Ovary (tissue), 10 donors: ENCODE measurements at regions of chr1 and their contacts with region 1.

Region 1: DNA sequence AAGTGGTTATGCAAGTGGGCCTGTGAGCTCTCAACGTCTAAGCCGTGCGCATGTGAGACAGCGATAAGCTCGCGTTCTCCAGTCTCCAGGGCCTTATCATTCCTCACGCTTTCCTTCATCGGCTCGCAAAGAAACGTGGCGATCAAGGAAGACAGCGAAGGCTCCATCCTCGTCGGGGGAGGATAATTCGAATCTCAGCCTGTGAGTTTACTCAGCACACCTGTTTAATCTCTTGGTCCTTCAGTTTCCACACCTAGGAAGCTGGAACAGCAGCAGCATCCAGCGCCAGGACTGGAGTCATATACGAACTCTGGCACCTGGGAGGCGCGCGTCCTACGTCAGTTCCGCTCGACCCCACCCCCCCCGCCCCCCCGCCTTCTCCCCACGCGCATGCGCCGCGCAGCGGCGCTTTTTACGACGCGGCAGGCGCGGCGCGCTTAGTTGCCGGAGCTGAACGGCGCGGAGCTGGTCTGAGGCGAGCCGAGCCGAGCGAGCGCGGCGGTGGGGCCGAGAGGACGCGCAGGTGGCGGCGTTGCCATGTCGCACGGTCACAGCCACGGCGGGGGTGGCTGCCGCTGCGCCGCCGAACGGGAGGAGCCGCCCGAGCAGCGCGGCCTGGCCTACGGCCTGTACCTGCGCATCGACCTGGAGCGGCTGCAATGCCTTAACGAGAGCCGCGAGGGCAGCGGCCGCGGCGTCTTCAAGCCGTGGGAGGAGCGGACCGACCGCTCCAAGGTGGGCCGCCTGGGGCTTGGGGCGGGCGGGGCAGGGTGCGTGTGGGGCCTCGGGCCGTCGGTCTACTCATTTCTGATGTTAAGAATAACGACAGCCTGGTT is at the start of gene PITHD1:
- DNase-seq: peak; percentile 81 to 88 (median 86)
- H3K4me3 ChIP-seq: peak within 1 kb of the TSS; percentile 97
- H3K27ac ChIP-seq: peak within 1 kb of the TSS; percentile 74 to 84
- H3K4me1 ChIP-seq: peaks cover 9% of the 10 kb centered on the region
- H3K27me3 ChIP-seq: no peaks in the 10 kb centered on the region
- CTCF ChIP-seq: no peak
- EP300 ChIP-seq: peak; percentile 6
- POLR2A ChIP-seq: peak; percentile 89
- total RNA-seq, gene PITHD1: 39.9 to 46.5 (median 42.7) TPM

Region 2: GRCh38 chr1:23800400-23801337 is 22.5 kb after region 1 on chr1 and contains the start of gene GALE:
- intact Hi-C with region 1: no loop called
- DNase-seq: peak; percentile 97 to 99 (median 97)
- H3K4me3 ChIP-seq: peak within 1 kb of the TSS; percentile 78
- H3K27ac ChIP-seq: peak within 1 kb of the TSS; percentile 77 to 80
- H3K4me1 ChIP-seq: peaks cover 17% of the 10 kb centered on the region
- H3K27me3 ChIP-seq: no peaks in the 10 kb centered on the region
- CTCF ChIP-seq: no peak
- EP300 ChIP-seq: no peak
- POLR2A ChIP-seq: peak; percentile 70
- total RNA-seq, gene GALE: 10.1 to 17.7 (median 13.4) TPM

Region 3: GRCh38 chr1:23867953-23868556 is 89.9 kb after region 1 on chr1 and contains the start of gene FUCA1:
- intact Hi-C with region 1: loop called in 1 of 4 experiments (anchors 5 kb)
- DNase-seq: peak; percentile 93 to 96 (median 95)
- H3K4me3 ChIP-seq: peak within 1 kb of the TSS; percentile 65
- H3K27ac ChIP-seq: peak within 1 kb of the TSS; percentile 19 to 67
- H3K4me1 ChIP-seq: peaks cover 6% of the 10 kb centered on the region
- H3K27me3 ChIP-seq: no peaks in the 10 kb centered on the region
- CTCF ChIP-seq: peak; percentile 94 to 99 (median 94)
- EP300 ChIP-seq: no peak
- POLR2A ChIP-seq: peak; percentile 54
- total RNA-seq, gene FUCA1: 21.7 to 66.1 (median 25.6) TPM

Region 4: GRCh38 chr1:23916209-23917131 is 138.3 kb after region 1 on chr1:
- intact Hi-C with region 1: loop called in 1 of 4 experiments (anchors 5 kb)
- DNase-seq: peak; percentile 49 to 62 (median 61)
- H3K4me3 ChIP-seq: no peak overlapping the region
- H3K27ac ChIP-seq: no peak overlapping the region
- H3K4me1 ChIP-seq: peaks cover 2% of the 10 kb centered on the region
- H3K27me3 ChIP-seq: no peaks in the 10 kb centered on the region
- CTCF ChIP-seq: peak; percentile 16 to 22 (median 19)
- EP300 ChIP-seq: no peak
- POLR2A ChIP-seq: no peak

Region 5: GRCh38 chr1:24018611-24019580 is 240.7 kb after region 1 on chr1:
- intact Hi-C with region 1: loop called in 1 of 4 experiments (anchors 10 kb)
- DNase-seq: peak; percentile 97 to 99 (median 99)
- H3K4me3 ChIP-seq: no peak overlapping the region
- H3K27ac ChIP-seq: peak overlapping the region; percentile 83 to 86
- H3K4me1 ChIP-seq: peaks cover 28% of the 10 kb centered on the region
- H3K27me3 ChIP-seq: no peaks in the 10 kb centered on the region
- CTCF ChIP-seq: peak in 1 of 3 donors; percentile 23
- EP300 ChIP-seq: peak; percentile 76
- POLR2A ChIP-seq: no peak